ENCODE measurements at regions of chr5 and their contacts with region 1.

Region 1: DNA sequence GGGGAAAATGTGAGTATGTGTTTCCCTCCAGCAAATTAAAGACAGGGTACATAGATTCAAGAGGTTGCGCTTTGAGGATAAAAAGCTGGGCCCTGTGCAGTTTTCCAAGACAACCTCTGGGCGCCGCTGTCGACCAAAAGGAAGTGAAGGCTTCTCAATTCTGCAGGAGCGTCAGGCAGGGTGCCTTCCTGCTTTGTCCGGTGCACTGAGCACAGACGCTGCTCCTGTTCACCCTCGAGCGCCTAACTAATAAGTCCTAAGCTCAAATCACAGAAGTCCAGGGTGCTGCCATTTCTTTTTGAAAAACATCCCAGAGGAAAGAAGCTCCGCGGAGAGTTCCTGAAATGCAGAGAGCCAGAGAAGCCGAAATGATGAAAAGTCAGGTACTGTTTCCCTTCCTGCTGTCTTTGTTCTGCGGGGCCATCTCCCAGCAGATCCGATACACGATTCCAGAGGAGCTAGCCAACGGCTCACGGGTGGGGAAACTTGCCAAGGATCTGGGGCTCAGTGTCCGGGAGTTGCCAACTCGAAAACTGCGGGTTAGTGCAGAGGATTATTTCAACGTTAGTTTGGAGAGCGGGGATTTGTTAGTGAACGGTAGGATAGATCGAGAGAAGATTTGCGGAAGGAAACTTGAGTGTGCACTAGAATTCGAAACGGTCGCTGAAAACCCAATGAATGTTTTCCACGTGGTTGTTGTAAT is at the start of gene PCDHGB1:
- DNase-seq: no peak
- H3K4me3 ChIP-seq: peak within 1 kb of the TSS in 1 of 3 donors; percentile 45
- H3K27ac ChIP-seq: no peak within 1 kb of the TSS
- H3K4me1 ChIP-seq: no peaks in the 10 kb centered on the region
- H3K27me3 ChIP-seq: peaks cover 0 to 3% of the 10 kb centered on the region in 2 donors
- CTCF ChIP-seq: peak in 1 of 3 donors; percentile 35
- POLR2A ChIP-seq: no peak
- total RNA-seq, gene PCDHGB1: 2.7 to 5.9 (median 5.1) TPM

Region 2: DNA sequence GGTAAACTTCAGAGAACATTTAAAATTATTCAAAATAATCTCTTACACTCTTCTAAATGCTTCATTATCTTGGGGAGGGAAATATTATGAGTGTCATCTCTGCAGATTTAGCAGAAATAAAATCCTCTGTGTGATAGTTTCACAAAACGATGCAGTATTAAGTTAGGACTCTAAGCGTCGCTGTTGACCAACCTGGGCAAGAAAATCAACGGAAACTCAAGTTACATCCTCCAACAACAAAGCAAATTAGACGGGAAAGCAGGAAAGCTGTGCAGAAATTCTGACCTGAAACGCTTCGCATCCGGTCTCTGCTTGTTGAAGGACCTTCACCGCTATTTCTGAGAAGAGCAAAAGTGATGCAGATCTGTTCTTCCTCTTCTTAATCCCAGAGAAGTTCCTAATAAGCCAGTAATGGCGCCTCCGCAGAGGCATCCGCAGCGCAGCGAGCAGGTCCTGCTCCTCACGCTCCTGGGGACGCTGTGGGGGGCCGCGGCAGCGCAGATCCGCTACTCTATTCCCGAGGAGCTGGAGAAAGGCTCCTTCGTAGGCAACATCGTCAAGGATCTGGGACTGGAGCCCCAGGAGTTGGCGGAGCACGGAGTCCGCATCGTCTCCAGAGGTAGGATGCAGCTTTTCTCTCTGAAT is 23.7 kb after region 1 on chr5 and contains the start of gene PCDHGA6:
- intact Hi-C with region 1: loop called (anchors 2 kb)
- DNase-seq: no peak
- H3K4me3 ChIP-seq: peak within 1 kb of the TSS; percentile 19 to 55 (median 30)
- H3K27ac ChIP-seq: no peak within 1 kb of the TSS
- H3K4me1 ChIP-seq: no peaks in the 10 kb centered on the region
- H3K27me3 ChIP-seq: no peaks in the 10 kb centered on the region
- CTCF ChIP-seq: no peak
- POLR2A ChIP-seq: no peak
- total RNA-seq, gene PCDHGA6: 4.0 to 8.5 (median 8.3) TPM